Calu3 (cell line): ENCODE measurements at regions of chrX and their contacts with region 1.

Region 1: GRCh38 chrX:13487731-13488523 is 81.5 kb upstream of the EGFL6 start:
- DNase-seq: peak; percentile 78
- H3K4me3 Mint-ChIP-seq: peak overlapping the region; percentile 11
- H3K27ac Mint-ChIP-seq: peak overlapping the region; percentile 93
- H3K4me1 Mint-ChIP-seq: peaks cover 49% of the 10 kb centered on the region
- H3K27me3 Mint-ChIP-seq: no peaks in the 10 kb centered on the region
- CTCF ChIP-seq: peak; percentile 57

Region 2: DNA sequence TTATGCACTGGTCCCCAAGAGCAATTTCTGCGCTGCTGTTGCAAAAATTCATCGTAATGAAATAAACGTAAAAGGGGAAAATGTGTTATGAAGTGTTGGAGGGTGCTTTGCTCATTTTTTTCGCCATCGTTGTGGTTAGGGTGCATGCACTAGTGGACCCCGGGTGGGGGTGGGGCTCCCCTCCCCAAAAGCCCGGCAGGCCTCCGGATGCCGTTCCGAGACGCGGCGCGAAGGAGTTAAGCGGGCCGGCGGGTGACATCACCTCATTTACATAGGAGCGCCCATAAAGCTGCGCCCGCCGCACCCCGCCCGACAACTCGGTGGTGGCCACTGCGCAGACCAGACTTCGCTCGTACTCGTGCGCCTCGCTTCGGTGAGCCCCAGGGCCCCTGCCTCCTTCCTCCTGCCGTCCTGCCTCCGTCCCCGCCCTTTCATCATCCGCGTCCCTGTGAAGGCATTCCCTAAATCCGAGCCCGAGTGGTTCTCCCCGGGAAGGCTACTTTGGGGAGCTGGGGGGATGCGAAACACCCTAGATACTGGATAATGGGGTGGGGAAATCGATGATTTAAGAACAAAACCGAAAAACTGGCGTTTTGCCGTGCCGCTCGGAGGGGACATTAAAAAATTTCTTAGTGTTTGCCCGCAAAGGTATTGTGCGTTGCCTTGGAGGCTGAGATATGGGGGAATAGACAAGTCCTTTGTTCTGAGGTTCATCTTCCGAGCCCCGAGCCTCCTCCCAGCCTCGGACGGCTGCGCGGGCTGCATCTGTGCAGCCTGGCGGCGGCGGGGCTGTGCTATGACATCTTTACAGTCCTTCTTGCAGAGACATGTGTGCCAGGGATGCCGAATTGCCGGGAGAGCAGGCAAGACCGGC is 512.9 kb before region 1 on chrX and contains the start of gene TMSB4X:
- CTCF ChIA-PET with region 1: interaction called, 7 read pairs
- intact Hi-C with region 1: loop called (anchors 2 kb)
- DNase-seq: peak; percentile 90
- H3K4me3 Mint-ChIP-seq: peak within 1 kb of the TSS; percentile 85
- H3K27ac Mint-ChIP-seq: peak within 1 kb of the TSS; percentile 99
- H3K4me1 Mint-ChIP-seq: peaks cover 59% of the 10 kb centered on the region
- H3K27me3 Mint-ChIP-seq: no peaks in the 10 kb centered on the region
- CTCF ChIP-seq: no peak
- total RNA-seq, gene TMSB4X: 5,274 and 5,368 TPM in 2 replicates

Region 3: GRCh38 chrX:13087322-13088155 is 400.4 kb before region 1 on chrX:
- CTCF ChIA-PET with region 1: interaction called, 12 read pairs
- intact Hi-C with region 1: loop called (anchors 2 kb)
- DNase-seq: peak; percentile 50
- H3K4me3 Mint-ChIP-seq: no peak overlapping the region
- H3K27ac Mint-ChIP-seq: peak overlapping the region; percentile 95
- H3K4me1 Mint-ChIP-seq: peaks cover 25% of the 10 kb centered on the region
- H3K27me3 Mint-ChIP-seq: no peaks in the 10 kb centered on the region
- CTCF ChIP-seq: no peak

Region 4: GRCh38 chrX:13223868-13224555 is 263.9 kb before region 1 on chrX:
- CTCF ChIA-PET with region 1: interaction called, 10 read pairs
- intact Hi-C with region 1: loop called (anchors 2 kb)
- DNase-seq: peak; percentile 50
- H3K4me3 Mint-ChIP-seq: peak overlapping the region; percentile 21
- H3K27ac Mint-ChIP-seq: peak overlapping the region; percentile 92
- H3K4me1 Mint-ChIP-seq: peaks cover 54% of the 10 kb centered on the region
- H3K27me3 Mint-ChIP-seq: no peaks in the 10 kb centered on the region
- CTCF ChIP-seq: no peak

Region 5: DNA sequence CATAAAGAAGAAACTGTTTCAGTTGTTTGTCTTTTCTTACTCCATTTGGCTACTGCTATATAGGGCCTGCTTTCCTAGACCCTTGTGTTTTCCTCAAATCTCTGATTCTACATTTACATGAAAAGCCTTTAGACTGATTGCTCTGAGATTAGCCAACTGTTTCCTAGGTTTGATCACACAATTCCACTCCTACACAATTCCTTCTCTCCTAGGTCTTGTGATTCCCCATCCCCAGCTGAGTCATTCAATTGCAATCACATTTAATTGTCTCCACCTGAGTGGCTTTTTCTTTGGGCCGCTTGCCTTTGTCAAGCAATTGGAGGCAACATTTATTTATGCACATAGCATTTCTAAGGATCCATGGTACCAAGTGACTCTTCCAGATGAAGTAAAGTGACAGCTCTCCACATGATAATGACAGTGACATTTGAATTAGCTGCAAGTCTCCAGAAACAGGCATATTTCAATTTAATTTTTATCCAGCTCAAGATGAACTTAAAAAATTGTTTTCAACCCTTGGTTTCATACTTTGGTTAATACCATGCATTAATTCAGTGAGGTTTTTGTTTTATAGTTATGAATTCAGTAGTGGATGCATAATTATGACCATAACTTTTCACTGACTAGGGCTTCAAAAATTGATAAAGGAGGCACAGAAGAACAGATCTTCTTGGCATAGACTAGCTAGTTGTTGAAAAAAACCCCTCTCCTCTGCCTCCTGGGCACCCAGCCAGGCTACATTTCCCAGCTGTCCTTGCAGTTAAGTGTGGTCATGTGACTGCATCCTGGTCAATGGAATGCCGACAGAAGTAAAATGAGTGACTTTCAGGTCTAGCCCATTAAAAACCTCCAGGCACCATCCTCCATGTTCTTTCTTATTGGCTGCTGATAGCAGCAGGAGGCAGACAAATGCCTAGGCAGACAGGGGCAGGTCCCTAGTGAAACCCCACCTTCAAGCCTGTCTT is 203.7 kb before region 1 on chrX:
- CTCF ChIA-PET with region 1: no interaction called
- intact Hi-C with region 1: loop called (anchors 1 kb)
- DNase-seq: no peak
- H3K4me3 Mint-ChIP-seq: no peak overlapping the region
- H3K27ac Mint-ChIP-seq: peak overlapping the region; percentile 90
- H3K4me1 Mint-ChIP-seq: peaks cover 47% of the 10 kb centered on the region
- H3K27me3 Mint-ChIP-seq: no peaks in the 10 kb centered on the region
- CTCF ChIP-seq: no peak

Region 6: DNA sequence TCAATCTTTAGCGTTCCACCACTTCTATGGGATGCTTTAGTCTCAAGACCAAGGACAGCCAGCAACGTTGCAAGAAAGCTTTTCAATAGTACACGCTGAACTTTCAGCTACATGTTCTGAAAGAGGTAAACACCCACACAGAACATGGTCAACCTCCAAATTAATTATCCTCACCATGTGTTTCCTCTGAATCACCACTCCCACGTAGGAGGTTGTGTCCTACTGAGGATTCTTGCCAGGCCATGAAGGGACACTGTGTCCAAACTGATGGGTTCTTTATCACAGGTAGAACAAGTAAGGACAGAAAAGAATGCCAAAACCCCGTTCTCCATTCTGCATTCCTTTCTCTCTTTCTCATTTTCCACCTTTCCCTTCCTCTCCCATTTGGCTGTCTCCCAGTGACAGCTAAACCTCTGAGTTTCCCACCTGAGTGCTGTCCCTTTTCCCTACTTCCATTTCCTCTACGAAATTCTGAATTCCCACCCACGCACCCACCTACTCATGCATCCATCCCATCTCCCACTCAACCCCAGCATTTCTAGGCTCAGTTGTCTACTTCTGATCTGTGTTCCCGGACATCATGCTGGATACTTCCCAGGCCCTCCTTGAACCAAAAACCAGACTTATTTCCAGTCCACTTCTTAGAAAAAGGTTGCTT is 357.9 kb after region 1 on chrX:
- CTCF ChIA-PET with region 1: no interaction called
- intact Hi-C with region 1: no loop called
- DNase-seq: no peak
- H3K4me3 Mint-ChIP-seq: no peak overlapping the region
- H3K27ac Mint-ChIP-seq: no peak overlapping the region
- H3K4me1 Mint-ChIP-seq: no peaks in the 10 kb centered on the region
- H3K27me3 Mint-ChIP-seq: no peaks in the 10 kb centered on the region
- CTCF ChIP-seq: no peak